Activated B cell treated with CpG ODN at 0.5 μM for 24 hours (primary cell): ENCODE measurements at regions of chr16 and their contacts with region 1.

Region 1: DNA sequence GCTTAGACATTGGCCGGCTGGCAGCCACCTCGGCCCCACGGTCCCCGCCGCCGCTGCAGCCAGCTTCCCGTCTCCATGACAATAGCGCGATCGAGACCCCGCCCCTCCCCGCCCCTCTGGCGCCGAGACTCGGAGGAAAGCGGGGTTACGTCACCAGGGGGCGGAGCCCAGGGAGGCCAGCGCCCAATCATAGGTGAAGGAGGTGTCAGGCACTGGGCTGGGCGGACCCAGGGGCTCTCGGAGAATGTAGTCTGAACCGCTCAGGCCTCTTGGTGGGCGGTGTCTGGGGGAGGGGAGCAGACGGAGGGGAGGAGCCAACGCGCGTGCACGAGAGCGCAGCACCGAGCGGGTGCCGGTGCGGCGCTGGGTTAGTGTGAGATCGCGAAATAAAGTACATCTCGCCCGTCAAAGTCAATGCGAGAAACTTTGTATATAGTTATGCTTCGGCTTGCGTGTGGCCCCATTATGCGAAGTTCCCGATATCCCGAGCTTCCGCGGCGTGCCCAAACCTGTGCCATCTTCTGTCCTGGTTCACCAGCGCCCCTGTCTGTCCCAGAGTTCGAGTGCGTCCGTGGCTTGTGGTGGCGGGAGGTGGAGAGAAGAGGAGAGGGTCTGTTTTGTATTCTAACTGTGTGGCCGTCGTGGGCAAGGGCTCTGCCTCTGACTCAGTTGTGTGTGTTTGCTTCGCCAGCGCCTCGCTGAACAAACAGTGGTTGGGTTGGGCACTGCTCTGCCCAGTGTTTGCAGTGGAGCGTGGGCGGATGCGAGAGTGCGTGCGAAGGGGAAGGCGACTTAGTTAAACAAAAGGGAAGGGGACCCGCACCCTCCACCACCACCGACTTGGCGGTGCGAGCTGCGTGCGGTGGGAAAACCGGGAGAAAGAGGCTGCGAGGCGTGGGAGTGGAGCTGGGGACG is 1.3 kb upstream of the IRX5 start:
- DNase-seq: peak; percentile 89
- ATAC-seq: peak; percentile 95
- H3K4me3 Mint-ChIP-seq: peak overlapping the region; percentile 88
- H3K27ac Mint-ChIP-seq: peak overlapping the region; percentile 43
- H3K4me1 Mint-ChIP-seq: peaks cover 31% of the 10 kb centered on the region
- H3K27me3 Mint-ChIP-seq: peaks cover 53% of the 10 kb centered on the region
- CTCF ChIP-seq: no peak

Region 2: DNA sequence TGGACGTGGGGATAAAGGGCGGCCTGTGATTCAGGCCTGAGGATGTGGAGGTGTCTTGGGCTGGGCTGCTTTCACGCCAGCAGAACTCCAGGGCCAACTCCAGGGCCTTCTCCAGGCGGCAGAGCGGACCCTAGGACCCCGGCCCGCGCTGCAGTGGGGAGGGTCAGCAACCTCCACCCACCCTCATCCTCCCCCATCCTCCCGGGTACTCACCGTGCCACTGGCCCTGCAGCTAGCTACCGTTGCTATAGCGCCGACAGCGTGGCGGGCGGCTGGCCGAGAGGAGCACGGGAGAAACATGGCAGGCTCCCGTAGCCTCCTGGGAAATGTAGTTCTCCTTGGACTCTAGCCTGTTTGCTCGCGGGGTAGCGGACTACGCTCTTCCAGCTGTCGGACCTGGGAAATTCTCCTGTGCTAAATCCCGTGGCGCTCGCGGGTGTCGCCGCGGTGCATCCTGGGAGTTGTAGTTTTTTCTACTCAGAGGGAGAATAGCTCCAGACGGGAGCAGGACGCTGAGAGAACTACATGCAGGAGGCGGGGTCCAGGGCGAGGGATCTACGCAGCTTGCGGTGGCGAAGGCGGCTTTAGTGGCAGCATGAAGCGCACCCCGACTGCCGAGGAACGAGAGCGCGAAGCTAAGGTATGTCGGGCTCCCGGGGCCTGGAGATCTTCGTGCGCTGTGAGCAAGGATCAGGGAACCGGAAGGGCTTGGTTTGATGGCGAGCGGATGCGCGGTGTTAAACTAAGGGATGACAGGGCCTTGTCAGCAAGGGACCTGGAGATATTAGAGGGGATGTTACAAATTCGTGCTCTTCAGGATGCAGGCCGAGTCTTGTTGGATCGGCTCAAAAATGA is 1225.5 kb before region 1 on chr16 and contains the starts of genes FTO and RPGRIP1L:
- CTCF ChIA-PET with region 1: no interaction called
- POLR2A ChIA-PET with region 1: no interaction called
- intact Hi-C with region 1: loop called (anchors 1 kb)
- DNase-seq: peak; percentile 91
- ATAC-seq: peak; percentile 96
- H3K4me3 Mint-ChIP-seq: peak within 1 kb of the TSS; percentile 96
- H3K27ac Mint-ChIP-seq: peak within 1 kb of the TSS; percentile 90
- H3K4me1 Mint-ChIP-seq: peaks cover 27% of the 10 kb centered on the region
- H3K27me3 Mint-ChIP-seq: no peaks in the 10 kb centered on the region
- CTCF ChIP-seq: no peak
- total RNA-seq, gene FTO: 59.7 and 65.8 TPM in 2 replicates
- total RNA-seq, gene RPGRIP1L: 5.0 and 5.8 TPM in 2 replicates

Region 3: DNA sequence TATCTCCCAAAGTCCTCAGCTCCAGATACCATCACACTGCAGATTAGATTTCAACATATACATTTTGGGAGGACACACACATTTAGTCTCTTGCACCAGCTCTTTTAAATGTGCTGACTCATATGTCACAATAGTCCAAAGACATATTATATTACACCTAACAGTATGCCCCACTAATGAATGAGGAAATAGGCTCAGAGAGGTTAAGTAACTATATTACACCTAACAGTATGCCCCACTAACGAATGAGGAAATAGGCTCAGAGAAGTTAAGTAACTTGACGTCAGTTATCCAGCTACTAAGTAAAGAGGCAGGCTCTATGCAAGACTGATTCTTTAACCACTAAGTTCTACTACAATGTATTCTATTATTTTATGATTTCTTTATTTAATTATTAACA is 404.3 kb after region 1 on chr16:
- CTCF ChIA-PET with region 1: no interaction called
- POLR2A ChIA-PET with region 1: no interaction called
- intact Hi-C with region 1: loop called (anchors 10 kb)
- DNase-seq: no peak
- ATAC-seq: peak; percentile 79
- H3K4me3 Mint-ChIP-seq: no peak overlapping the region
- H3K27ac Mint-ChIP-seq: no peak overlapping the region
- H3K4me1 Mint-ChIP-seq: peaks cover 63% of the 10 kb centered on the region
- H3K27me3 Mint-ChIP-seq: peaks cover 21% of the 10 kb centered on the region
- CTCF ChIP-seq: no peak